ENCODE measurements at regions of chr2 and their contacts with region 1.

Region 1: DNA sequence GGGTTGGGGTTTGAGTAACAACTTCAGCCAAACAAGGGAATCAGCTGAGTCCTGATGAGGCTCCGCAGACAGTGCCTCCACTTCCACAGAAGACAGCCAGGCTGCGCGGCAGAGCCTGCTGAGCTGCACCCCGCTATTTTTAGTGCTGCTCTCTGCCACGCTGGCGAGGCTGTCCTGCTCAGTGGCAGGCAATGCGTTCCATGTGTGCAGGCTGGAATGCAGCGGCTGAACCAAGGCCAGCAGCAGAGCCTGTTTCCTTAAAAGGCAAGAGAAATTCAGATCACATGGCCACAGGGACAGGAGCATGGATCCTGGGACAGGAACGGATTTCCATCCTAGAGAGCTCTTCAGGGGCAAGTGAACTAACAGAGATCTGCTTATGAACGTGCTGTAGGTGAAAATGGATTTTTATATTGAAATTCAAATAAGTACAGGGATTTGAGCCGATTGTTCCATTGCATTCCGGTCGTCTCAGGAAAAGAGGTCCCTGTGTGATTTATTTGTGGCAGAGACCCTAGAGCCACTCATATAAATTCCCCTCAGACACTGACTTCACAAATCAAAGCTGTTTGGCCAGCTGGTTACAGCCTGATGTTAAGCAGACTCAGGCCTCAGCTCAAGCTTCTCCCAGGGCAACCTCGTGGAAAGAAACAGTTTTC is 98.7 kb downstream of the COL6A3 start:
- DNase-seq: peak; percentile 98
- ATAC-seq: peak; percentile 69
- H3K4me3 ChIP-seq: no peak overlapping the region
- H3K27ac ChIP-seq: peak overlapping the region; percentile 95
- H3K4me1 ChIP-seq: peaks cover 26% of the 10 kb centered on the region
- H3K27me3 ChIP-seq: no peaks in the 10 kb centered on the region
- CTCF ChIP-seq: peak; percentile 45
- POLR2A ChIP-seq: 0 out of 2 replicates have a peak, but pooled peaks have one; percentile 23
- RAD21 ChIP-seq: peak; percentile 56

Region 2: GRCh38 chr2:237092920-237093781 is 222.1 kb before region 1 on chr2:
- CTCF ChIA-PET with region 1: no interaction called
- POLR2A ChIA-PET with region 1: no interaction called
- dilution Hi-C with region 1: no loop called
- in situ Hi-C with region 1: no loop called
- intact Hi-C with region 1: loop called (anchors 10 kb)
- DNase-seq: peak; percentile 85
- ATAC-seq: peak; percentile 72
- H3K4me3 ChIP-seq: no peak overlapping the region
- H3K27ac ChIP-seq: peak overlapping the region; percentile 75; the same call in 1 of the 2 replicates
- H3K4me1 ChIP-seq: peaks cover 20% of the 10 kb centered on the region
- H3K27me3 ChIP-seq: no peaks in the 10 kb centered on the region
- CTCF ChIP-seq: peak; percentile 84
- POLR2A ChIP-seq: no peak
- RAD21 ChIP-seq: peak; percentile 87

Region 3: DNA sequence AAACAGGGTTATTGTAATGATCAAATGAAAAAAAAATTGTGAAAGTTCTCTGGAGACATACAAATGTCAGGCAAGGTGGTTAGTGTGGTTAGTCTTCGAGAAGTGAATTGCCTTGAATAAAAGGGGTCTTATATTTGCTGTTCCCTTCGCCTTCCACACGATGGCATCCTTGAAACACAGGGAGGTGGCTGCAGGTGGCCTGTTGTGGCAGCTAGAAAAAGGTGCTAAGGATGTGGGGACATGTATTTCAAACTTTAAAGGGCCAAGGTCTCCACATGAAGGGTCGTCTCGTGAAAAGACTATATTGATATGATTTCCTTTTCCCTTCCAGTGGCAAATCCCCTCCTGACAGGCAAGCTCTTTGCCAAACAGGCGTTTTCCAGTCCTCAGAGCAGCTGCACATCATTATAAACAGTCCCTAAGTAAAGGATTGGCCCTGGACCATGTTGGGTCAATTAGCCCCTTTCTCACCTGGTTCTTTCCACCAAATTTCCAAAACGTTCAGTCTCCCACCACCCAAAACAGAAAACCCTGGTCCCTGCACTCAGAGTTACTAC is 161.1 kb before region 1 on chr2:
- CTCF ChIA-PET with region 1: no interaction called
- POLR2A ChIA-PET with region 1: no interaction called
- dilution Hi-C with region 1: no loop called
- in situ Hi-C with region 1: no loop called
- intact Hi-C with region 1: loop called (anchors 2 kb)
- DNase-seq: peak; percentile 81
- ATAC-seq: no peak; the same call in 1 of the 2 replicates
- H3K4me3 ChIP-seq: no peak overlapping the region
- H3K27ac ChIP-seq: peak overlapping the region; percentile 1; the same call in 1 of the 2 replicates
- H3K4me1 ChIP-seq: peaks cover 30% of the 10 kb centered on the region
- H3K27me3 ChIP-seq: no peaks in the 10 kb centered on the region
- CTCF ChIP-seq: peak; percentile 91
- POLR2A ChIP-seq: 0 out of 2 replicates have a peak, but pooled peaks have one; percentile 21
- RAD21 ChIP-seq: peak; percentile 97

Region 4: DNA sequence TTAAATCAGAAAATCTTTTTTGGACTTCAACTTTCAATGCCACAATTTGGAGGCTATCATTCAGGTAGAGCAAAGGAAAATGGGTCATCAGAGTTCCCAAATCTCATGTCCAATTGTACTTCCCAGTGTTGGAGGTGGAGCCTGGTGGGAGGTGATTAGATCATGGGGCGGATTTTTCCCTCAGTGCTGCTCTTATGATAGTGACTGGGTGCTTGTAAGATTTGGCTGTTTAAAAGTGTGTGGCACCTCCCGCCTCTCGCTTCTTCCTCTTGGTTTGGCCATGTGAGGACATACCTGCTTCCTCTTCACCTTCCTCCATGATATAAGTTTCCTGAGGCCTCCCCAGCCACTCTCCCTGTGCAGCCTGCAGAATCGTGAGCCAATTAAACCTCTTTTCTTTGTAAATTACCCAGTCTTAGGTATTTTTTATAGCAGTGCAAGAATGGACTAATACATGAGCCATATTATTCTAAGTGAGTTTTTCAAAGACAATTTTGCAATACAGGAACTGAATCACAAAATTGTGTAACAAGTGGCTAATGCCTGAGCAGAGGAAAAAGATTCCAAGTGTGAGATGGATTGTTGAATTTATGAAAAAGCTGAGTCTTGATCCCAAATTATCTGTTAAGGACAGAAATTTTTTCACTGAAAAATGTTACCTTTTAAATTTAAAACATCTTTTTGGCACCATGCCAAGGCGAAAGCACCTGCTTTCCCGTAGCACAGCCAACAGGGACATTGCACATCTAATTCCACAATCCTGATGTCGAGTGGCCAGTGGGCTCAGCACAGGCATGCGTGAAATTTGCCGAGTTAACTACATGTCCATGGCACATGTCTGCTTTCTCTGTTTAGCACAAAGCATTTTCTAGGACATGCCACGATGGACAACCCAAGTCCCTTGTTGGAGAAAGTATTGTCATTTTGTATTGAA is 52.2 kb before region 1 on chr2:
- CTCF ChIA-PET with region 1: no interaction called
- POLR2A ChIA-PET with region 1: interaction called, 10 read pairs
- dilution Hi-C with region 1: no loop called
- in situ Hi-C with region 1: no loop called
- intact Hi-C with region 1: no loop called
- DNase-seq: peak; percentile 89
- ATAC-seq: peak; percentile 10
- H3K4me3 ChIP-seq: no peak overlapping the region
- H3K27ac ChIP-seq: peak overlapping the region; percentile 92
- H3K4me1 ChIP-seq: peaks cover 30% of the 10 kb centered on the region
- H3K27me3 ChIP-seq: no peaks in the 10 kb centered on the region
- CTCF ChIP-seq: no peak
- POLR2A ChIP-seq: no peak
- RAD21 ChIP-seq: no peak

Region 5: GRCh38 chr2:237291138-237291792 is 24.0 kb before region 1 on chr2:
- CTCF ChIA-PET with region 1: no interaction called
- POLR2A ChIA-PET with region 1: interaction called, 10 read pairs
- dilution Hi-C with region 1: no loop called
- in situ Hi-C with region 1: no loop called
- intact Hi-C with region 1: no loop called
- DNase-seq: peak; percentile 98
- ATAC-seq: peak; percentile 86
- H3K4me3 ChIP-seq: no peak overlapping the region
- H3K27ac ChIP-seq: peak overlapping the region; percentile 96
- H3K4me1 ChIP-seq: peaks cover 15% of the 10 kb centered on the region
- H3K27me3 ChIP-seq: no peaks in the 10 kb centered on the region
- CTCF ChIP-seq: no peak
- POLR2A ChIP-seq: peak; percentile 61
- RAD21 ChIP-seq: peak; percentile 32

Region 6: DNA sequence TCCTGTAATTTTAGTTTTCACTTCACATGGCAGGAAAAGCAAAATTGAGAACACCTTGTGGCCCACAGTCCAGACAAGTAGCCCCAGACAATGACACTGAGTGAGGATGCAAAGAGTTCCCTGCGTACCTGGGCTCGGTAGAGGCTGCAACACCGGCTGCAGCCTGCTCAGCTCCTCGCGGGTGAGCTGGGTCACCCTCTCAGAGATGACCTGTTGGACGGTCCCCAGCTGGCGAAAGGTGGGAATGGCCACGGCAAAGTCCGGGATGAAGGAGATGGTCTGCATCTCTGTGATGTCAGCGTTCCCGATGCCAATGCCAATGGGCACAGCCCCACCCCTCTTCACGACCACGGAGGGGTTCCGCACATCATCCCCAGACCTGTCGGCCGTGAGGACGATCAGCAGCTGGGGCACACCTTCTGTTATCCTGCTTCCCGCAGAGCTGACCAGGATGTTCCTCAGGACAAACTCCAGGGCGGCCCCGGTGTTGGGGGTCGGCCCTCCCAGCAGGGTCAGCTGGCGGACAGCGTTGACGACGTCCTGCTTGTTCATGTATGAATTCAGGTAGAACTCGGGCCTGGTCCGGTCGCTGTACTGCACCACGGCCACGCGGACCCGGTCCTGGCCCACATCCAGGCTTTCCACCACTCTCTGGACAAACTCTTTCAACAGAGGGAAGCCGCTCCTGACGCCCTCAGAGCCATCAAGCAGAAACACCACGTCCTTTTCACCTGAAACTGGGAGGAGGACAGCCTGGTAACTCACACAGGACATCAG is 59.2 kb after region 1 on chr2:
- CTCF ChIA-PET with region 1: no interaction called
- POLR2A ChIA-PET with region 1: no interaction called
- dilution Hi-C with region 1: no loop called
- in situ Hi-C with region 1: no loop called
- intact Hi-C with region 1: no loop called
- DNase-seq: no peak
- ATAC-seq: no peak
- H3K4me3 ChIP-seq: no peak overlapping the region
- H3K27ac ChIP-seq: no peak overlapping the region
- H3K4me1 ChIP-seq: peaks cover 1% of the 10 kb centered on the region; the same call in 1 of the 2 replicates
- H3K27me3 ChIP-seq: no peaks in the 10 kb centered on the region
- CTCF ChIP-seq: no peak
- POLR2A ChIP-seq: no peak; the same call in 1 of the 2 replicates
- RAD21 ChIP-seq: no peak

Measured in IMR-90 (cell line).